Transverse colon (tissue), 4 donors: ENCODE measurements at regions of chr20 and their contacts with region 1.

Region 1: GRCh38 chr20:46132705-46133120 is 14.6 kb downstream of the CD40 start:
- DNase-seq: peak; percentile 63
- H3K4me3 ChIP-seq: no peak overlapping the region
- H3K27ac ChIP-seq: no peak overlapping the region
- H3K4me1 ChIP-seq: no peaks in the 10 kb centered on the region
- H3K27me3 ChIP-seq: peaks cover 75% of the 10 kb centered on the region
- CTCF ChIP-seq: peak; percentile 66 to 69 (median 68)
- EP300 ChIP-seq: no peak
- POLR2A ChIP-seq: no peak

Region 2: GRCh38 chr20:44966030-44966961 is 1166.4 kb before region 1 on chr20 and contains the start of gene STK4:
- in situ Hi-C with region 1: no loop called
- intact Hi-C with region 1: no loop called
- DNase-seq: peak; percentile 97
- H3K4me3 ChIP-seq: peak within 1 kb of the TSS; percentile 70 to 97 (median 80)
- H3K27ac ChIP-seq: peak within 1 kb of the TSS; percentile 90 to 94 (median 92)
- H3K4me1 ChIP-seq: peaks cover 0 to 45% (median 20%) of the 10 kb centered on the region in 4 donors
- H3K27me3 ChIP-seq: no peaks in the 10 kb centered on the region
- CTCF ChIP-seq: peak; percentile 37 to 69 (median 53)
- EP300 ChIP-seq: no peak
- POLR2A ChIP-seq: peak; percentile 96
- total RNA-seq, gene STK4: 30.3 to 78.1 (median 38.3) TPM

Region 3: GRCh38 chr20:45187662-45188061 is 945.1 kb before region 1 on chr20:
- in situ Hi-C with region 1: no loop called
- intact Hi-C with region 1: no loop called
- DNase-seq: no peak
- H3K4me3 ChIP-seq: no peak overlapping the region
- H3K27ac ChIP-seq: no peak overlapping the region
- H3K4me1 ChIP-seq: no peaks in the 10 kb centered on the region
- H3K27me3 ChIP-seq: no peaks in the 10 kb centered on the region
- CTCF ChIP-seq: no peak
- EP300 ChIP-seq: no peak
- POLR2A ChIP-seq: no peak

Region 4: DNA sequence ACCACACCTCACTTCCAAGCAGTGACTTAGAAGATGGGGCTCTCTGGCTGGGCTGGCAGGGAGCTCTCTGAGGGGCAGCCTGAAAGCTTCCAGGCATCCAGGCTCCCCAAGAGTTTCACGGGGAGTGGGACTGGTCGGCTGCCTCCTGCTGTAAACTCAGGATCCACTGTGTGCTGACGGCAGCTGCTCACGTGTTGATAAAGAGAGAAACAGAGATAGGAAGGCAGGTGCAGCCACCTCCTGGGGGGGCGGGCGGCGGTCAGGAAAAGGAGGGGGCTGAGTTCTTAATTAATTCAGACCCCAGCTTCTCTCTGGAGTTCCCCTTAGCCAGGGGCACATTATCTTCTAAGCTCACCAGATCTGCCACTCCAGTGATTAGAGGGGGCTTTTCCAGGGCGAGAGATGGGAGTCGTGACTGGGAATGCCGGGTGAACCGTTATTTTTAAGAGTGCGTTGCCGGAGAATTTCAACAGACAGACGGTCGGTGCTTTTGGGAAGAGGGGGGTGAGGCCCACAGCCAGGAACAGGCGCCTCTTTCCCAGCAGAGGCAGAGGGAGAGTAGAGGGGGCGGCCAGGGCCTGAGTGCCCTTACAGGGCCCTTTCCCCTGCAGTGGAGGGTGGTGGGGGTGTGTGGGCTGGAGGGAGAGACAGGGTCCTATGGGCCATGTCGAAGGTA is 56.3 kb after region 1 on chr20:
- in situ Hi-C with region 1: no loop called
- intact Hi-C with region 1: no loop called
- DNase-seq: no peak
- H3K4me3 ChIP-seq: no peak overlapping the region
- H3K27ac ChIP-seq: no peak overlapping the region
- H3K4me1 ChIP-seq: no peaks in the 10 kb centered on the region
- H3K27me3 ChIP-seq: peaks cover 12% of the 10 kb centered on the region
- CTCF ChIP-seq: no peak
- EP300 ChIP-seq: no peak
- POLR2A ChIP-seq: no peak

Region 5: GRCh38 chr20:46230801-46231282 is 98.1 kb after region 1 on chr20:
- in situ Hi-C with region 1: no loop called
- intact Hi-C with region 1: no loop called
- DNase-seq: no peak
- H3K4me3 ChIP-seq: no peak overlapping the region
- H3K27ac ChIP-seq: no peak overlapping the region
- H3K4me1 ChIP-seq: no peaks in the 10 kb centered on the region
- H3K27me3 ChIP-seq: peaks cover 38% of the 10 kb centered on the region
- CTCF ChIP-seq: no peak
- EP300 ChIP-seq: no peak
- POLR2A ChIP-seq: no peak

Region 6: DNA sequence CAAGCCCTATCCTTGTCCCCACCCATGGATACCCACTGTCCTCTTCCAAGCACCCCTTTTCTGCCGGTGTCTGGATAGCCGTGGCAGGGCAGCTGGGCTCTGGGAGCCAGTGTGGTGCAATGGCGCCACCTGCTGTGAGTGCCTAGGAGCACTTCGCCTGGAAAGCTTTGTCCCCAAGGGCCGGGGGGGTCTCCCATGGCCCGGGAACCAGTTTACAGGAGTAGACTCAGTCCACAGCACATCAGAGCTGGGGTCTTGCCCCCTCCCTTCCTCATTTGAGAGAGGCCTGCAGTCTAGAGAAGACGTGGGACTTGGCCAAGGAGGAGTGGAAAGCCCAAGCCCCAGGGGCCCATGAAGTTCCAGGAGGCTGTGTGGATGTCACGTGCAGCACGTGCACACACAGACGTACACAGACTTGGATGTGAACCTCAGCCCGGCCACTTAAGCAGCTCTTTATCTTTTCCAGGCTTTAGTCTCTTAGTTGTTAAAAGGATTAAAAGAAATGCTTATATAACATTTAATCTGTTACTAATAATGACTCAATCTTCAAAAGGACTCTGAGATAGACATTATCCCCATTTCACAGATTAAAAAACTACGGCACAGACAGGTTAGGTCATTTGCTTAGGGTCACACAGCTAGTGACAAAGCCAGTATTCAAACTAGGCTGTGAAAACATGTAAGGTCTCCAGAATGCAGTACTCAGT is 216.5 kb after region 1 on chr20:
- in situ Hi-C with region 1: no loop called
- intact Hi-C with region 1: loop called (anchors 10 kb)
- DNase-seq: peak; percentile 43
- H3K4me3 ChIP-seq: no peak overlapping the region
- H3K27ac ChIP-seq: no peak overlapping the region
- H3K4me1 ChIP-seq: peaks cover 0 to 12% (median 2%) of the 10 kb centered on the region in 4 donors
- H3K27me3 ChIP-seq: peaks cover 1% of the 10 kb centered on the region
- CTCF ChIP-seq: peak; percentile 53 to 69 (median 59)
- EP300 ChIP-seq: no peak
- POLR2A ChIP-seq: no peak